Gastrocnemius medialis (tissue), 4 donors: ENCODE measurements at regions of chr20 and their contacts with region 1.

Region 1: DNA sequence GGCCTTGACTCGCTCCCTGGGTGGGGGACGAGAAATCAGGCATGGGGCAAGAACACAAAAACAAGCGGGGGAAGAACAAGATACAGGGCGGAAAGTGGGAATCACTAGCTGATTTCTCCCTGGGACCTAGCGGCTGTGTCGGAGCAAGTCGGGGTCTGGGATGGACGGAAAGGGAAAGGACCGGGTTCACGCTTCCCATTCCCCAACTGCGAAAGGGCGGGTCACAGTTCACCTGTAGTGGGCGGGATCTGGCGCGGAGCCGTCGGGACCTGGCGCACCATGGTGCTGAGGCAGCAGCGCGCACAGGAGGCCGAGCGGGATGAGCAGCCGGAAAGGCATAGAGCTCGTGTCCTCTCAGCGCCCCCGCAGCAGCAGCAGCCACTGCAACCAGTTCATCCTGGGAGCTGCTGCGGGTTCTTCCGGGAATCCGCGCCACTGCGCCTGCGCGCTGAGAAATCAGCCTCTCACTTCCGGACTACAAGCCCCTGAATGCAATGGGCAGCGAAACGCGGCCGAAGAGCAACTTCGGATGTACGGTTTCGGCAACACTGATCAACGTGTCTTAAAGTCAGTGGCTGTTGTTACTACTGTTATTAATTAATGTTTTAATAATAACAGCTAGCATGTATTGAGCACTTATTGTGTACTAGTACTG is at the start of gene EDEM2:
- DNase-seq: peak; percentile 87 to 91
- ATAC-seq: peak; percentile 95 to 96
- H3K4me3 ChIP-seq: peak within 1 kb of the TSS; percentile 74 to 84 (median 76)
- H3K27ac ChIP-seq: peak within 1 kb of the TSS; percentile 65 to 79 (median 72)
- H3K4me1 ChIP-seq: peaks cover 4 to 22% of the 10 kb centered on the region in 2 donors
- H3K27me3 ChIP-seq: no peaks in the 10 kb centered on the region
- CTCF ChIP-seq: peak in 1 of 5 experiments; percentile 10
- POLR2A ChIP-seq: peak; percentile 35 to 39
- total RNA-seq, gene EDEM2: 7.2 to 12.2 (median 9.5) TPM

Region 2: GRCh38 chr20:34876162-34877001 is 270.7 kb before region 1 on chr20 and contains the start of gene ACSS2:
- in situ Hi-C with region 1: no loop called
- intact Hi-C with region 1: loop called (anchors 5 kb)
- DNase-seq: peak; percentile 98 to 99
- ATAC-seq: peak; percentile 77 to 83
- H3K4me3 ChIP-seq: peak within 1 kb of the TSS; percentile 73 to 92 (median 83)
- H3K27ac ChIP-seq: peak within 1 kb of the TSS; percentile 87 to 97 (median 96)
- H3K4me1 ChIP-seq: peaks cover 44 to 54% of the 10 kb centered on the region in 2 donors
- H3K27me3 ChIP-seq: no peaks in the 10 kb centered on the region
- CTCF ChIP-seq: peak in 1 of 5 experiments; percentile 14
- POLR2A ChIP-seq: peak; percentile 90 to 94
- total RNA-seq, gene ACSS2: 70.5 to 94.7 (median 88.1) TPM

Region 3: GRCh38 chr20:35171753-35172433 is 24.8 kb after region 1 on chr20 and contains the start of gene PROCR:
- in situ Hi-C with region 1: no loop called
- intact Hi-C with region 1: loop called (anchors 1 kb)
- DNase-seq: peak; percentile 67 to 77
- ATAC-seq: peak; percentile 80 to 87
- H3K4me3 ChIP-seq: peak within 1 kb of the TSS; percentile 31 to 49 (median 46)
- H3K27ac ChIP-seq: peak within 1 kb of the TSS; percentile 42 to 71 (median 57)
- H3K4me1 ChIP-seq: no peaks in the 10 kb centered on the region
- H3K27me3 ChIP-seq: peaks cover 0 to 4% (median 0%) of the 10 kb centered on the region in 3 donors
- CTCF ChIP-seq: no peak
- POLR2A ChIP-seq: no peak
- total RNA-seq, gene PROCR: 5.6 to 19.4 (median 7.3) TPM

Region 4: GRCh38 chr20:35207950-35208611 is 61.0 kb after region 1 on chr20:
- in situ Hi-C with region 1: loop called in 1 of 4 experiments (anchors 10 kb)
- intact Hi-C with region 1: loop called (anchors 1 kb)
- DNase-seq: peak; percentile 53 to 67
- ATAC-seq: peak; percentile 90 to 95
- H3K4me3 ChIP-seq: peak overlapping the region in 3 of 4 donors; percentile 1 to 37 (median 23)
- H3K27ac ChIP-seq: peak overlapping the region; percentile 55 to 77 (median 60)
- H3K4me1 ChIP-seq: no peaks in the 10 kb centered on the region
- H3K27me3 ChIP-seq: no peaks in the 10 kb centered on the region
- CTCF ChIP-seq: peak; percentile 77 to 85 (median 81)
- POLR2A ChIP-seq: no peak

Region 5: DNA sequence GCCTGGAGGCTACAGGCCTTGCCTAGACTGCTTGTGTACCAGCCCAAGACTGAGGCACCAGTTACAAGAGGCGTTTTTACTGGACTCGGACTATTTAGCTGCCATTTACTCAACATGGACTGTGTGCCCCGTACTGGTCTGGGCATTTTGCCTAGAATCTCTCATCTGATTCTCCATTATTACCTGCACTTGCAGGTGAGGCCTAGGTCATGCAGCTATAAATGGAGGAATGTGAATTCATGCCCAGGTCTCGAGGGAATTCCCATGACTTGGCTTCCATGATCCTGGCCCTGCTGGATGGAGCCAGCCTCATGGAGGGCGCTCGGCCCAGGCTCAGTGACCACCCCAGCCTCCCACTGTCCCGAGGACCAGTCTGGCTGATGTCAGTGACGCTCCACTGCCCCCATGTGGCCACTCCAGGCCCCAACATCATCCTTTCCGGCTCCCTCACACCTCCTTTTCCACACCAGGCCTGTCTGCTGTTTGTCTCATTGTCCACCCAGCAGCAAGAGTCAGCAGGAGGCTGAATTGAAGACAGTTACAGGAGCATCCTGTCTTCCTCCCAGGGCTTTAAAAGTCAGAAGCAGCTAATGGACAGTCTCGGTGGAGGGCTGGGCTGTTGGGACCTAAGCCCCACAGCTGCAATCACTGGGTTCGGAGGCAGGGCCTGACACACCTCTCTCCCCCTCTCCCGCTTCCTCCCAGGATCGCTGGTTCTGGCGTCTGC is 122.2 kb after region 1 on chr20:
- in situ Hi-C with region 1: no loop called
- intact Hi-C with region 1: loop called (anchors 1 kb)
- DNase-seq: no peak
- ATAC-seq: peak in 1 of 2 donors; percentile 37
- H3K4me3 ChIP-seq: no peak overlapping the region
- H3K27ac ChIP-seq: no peak overlapping the region
- H3K4me1 ChIP-seq: no peaks in the 10 kb centered on the region
- H3K27me3 ChIP-seq: no peaks in the 10 kb centered on the region
- CTCF ChIP-seq: peak; percentile 31 to 65 (median 57)
- POLR2A ChIP-seq: no peak

Region 6: DNA sequence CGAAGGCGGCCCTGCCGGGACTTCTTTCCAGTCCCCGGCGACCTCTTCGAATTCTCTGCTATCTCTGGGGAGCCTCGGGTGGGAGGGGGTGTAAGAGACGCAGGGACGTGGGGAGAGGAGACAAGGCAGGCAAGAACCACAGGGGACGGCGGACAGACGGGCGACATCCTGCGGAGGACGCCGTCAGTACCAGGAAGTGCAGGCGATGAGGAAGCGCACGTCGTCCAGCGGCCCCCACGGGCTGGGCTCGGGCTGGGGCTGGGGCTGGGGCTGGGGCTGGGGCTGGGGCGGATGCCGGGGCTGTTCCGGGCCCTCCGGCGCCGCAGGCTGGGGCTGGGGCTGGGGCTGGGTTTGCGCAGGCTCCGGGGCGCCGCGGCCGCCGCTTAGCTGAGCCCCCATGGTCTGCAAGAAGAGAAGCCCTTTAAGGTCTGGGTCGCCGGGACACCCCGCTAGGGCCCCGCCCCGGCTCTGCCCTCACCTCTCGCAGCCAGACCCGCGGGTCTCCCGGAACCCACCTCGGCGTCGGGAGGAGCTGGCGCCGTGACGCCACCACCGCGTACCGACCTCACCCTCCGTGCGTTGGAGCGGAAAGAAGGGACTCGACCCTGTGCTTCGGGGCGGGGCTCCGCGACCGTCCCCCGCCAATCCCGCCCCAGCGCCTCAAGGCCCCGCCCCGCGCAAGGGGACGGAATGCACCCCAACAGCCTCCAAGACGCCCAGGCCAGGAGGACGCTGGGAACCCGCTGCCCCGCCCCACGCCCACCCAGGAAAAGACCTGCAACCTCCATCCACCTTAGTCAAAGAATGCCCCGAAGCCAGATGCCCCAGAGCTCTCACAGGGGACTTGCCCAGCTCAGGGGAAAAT is 130.7 kb after region 1 on chr20 and contains the start of gene MMP24OS:
- in situ Hi-C with region 1: no loop called
- intact Hi-C with region 1: loop called (anchors 2 kb)
- DNase-seq: peak; percentile 82 to 90
- ATAC-seq: peak; percentile 94 to 95
- H3K4me3 ChIP-seq: peak within 1 kb of the TSS; percentile 80 to 99 (median 85)
- H3K27ac ChIP-seq: peak within 1 kb of the TSS; percentile 89 to 97 (median 97)
- H3K4me1 ChIP-seq: peaks cover 12 to 14% of the 10 kb centered on the region in 2 donors
- H3K27me3 ChIP-seq: no peaks in the 10 kb centered on the region
- CTCF ChIP-seq: peak in 2 of 5 experiments; percentile 30 to 35
- POLR2A ChIP-seq: peak; percentile 94 to 96
- total RNA-seq, gene MMP24OS: 3.8 to 18.4 (median 12.4) TPM

Region 7: GRCh38 chr20:35454881-35455609 is 308.0 kb after region 1 on chr20 and contains the start of gene CEP250:
- in situ Hi-C with region 1: no loop called
- intact Hi-C with region 1: loop called (anchors 10 kb)
- DNase-seq: peak; percentile 84 to 90
- ATAC-seq: peak; percentile 92 to 94
- H3K4me3 ChIP-seq: peak within 1 kb of the TSS; percentile 69 to 99 (median 86)
- H3K27ac ChIP-seq: peak within 1 kb of the TSS; percentile 89 to 98 (median 94)
- H3K4me1 ChIP-seq: peaks cover 20 to 22% of the 10 kb centered on the region in 2 donors
- H3K27me3 ChIP-seq: no peaks in the 10 kb centered on the region
- CTCF ChIP-seq: no peak
- POLR2A ChIP-seq: peak; percentile 31 to 42
- total RNA-seq, gene CEP250: 10.9 to 13.9 (median 12.8) TPM